Activated T-helper 2 cell treated with anti-CD3 and anti-CD28 coated beads, Interferon-gamma antibody, Interleukin-2, Interleukin-4, amounts not matched to agents 10 μg/mL and 5 μg/mL and 100 μg/mL, durations not matched to agents 14 hours and 24 hours and 36 hours (primary cell): ENCODE measurements at regions of chr18 and their contacts with region 1.

Region 1: DNA sequence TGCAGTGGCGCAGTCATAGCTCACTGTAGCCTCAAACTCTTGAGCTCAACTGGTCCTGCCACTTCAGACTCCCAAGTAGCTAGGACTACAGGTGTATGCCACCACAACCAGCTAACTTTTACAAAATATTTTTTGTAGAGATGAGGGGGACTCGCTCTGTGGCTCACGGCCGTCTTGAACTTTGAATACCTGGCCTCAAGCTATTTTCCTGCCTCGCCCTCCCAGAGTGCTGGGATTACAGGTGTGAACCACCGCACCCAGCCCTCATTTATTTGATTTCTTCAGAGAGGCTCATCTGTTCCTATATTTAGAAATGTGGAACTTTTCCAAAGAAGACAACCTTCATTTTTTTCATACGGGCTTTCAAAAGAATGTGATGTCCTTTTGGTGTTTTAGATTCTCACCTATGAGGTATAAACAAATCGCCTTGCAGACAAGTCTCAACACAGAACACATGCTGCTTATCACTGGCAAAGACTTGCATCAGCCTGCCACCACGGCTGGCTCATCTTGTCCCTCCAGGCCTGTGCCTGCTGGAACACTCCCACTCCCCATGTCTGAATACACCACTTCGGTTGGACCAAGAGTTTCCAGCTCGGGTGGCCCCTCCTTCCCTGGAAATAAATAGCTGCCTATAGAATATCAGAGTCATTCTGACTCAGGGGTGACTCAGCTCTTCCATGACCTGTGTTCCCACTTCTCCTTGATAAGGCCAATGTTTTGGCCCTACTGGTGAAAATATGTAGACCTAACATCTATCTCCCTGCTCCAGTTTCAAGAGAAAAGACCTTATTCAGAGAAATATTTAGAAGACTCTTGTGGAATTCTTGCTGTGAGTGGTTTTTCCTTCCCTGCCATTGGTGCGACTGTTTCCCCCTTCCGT is 202.6 kb downstream of the TGIF1 start:
- DNase-seq: peak; percentile 34
- H3K4me3 Mint-ChIP-seq: peak overlapping the region; percentile 60
- H3K27ac Mint-ChIP-seq: peak overlapping the region; percentile 92
- H3K4me1 Mint-ChIP-seq: peaks cover 53% of the 10 kb centered on the region
- H3K27me3 Mint-ChIP-seq: no peaks in the 10 kb centered on the region

Region 2: DNA sequence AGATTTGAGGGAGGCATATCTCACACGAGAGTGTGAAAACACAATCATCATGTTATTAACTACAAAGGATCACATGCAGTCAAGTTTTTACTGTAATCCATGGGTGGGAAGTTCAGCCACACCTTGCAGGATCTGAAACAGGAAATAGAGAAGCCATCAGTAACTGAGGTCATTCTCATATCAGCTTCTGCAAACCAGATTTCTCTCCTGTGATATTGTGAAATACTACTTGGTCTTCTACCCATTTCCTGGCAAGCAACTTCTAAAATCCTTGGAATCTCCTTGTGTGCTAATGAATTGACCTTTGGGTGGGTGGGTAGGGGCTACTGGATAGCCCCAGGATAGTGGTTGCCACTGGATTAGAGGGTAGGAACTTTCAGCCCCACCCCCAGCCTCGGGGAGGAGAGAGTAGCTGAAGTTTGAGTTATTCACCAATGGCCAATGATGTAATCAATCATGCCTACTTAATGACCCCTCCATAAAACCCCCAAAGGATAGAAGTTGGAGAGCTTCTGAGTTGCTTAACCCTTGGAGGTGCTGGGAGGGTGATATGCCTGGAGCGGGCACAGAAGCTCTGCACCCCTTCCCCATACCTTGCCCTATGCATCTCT is 228.2 kb before region 1 on chr18:
- intact Hi-C with region 1: no loop called
- DNase-seq: no peak
- H3K4me3 Mint-ChIP-seq: no peak overlapping the region
- H3K27ac Mint-ChIP-seq: no peak overlapping the region
- H3K4me1 Mint-ChIP-seq: no peaks in the 10 kb centered on the region
- H3K27me3 Mint-ChIP-seq: peaks cover under 1% of the 10 kb centered on the region

Region 3: DNA sequence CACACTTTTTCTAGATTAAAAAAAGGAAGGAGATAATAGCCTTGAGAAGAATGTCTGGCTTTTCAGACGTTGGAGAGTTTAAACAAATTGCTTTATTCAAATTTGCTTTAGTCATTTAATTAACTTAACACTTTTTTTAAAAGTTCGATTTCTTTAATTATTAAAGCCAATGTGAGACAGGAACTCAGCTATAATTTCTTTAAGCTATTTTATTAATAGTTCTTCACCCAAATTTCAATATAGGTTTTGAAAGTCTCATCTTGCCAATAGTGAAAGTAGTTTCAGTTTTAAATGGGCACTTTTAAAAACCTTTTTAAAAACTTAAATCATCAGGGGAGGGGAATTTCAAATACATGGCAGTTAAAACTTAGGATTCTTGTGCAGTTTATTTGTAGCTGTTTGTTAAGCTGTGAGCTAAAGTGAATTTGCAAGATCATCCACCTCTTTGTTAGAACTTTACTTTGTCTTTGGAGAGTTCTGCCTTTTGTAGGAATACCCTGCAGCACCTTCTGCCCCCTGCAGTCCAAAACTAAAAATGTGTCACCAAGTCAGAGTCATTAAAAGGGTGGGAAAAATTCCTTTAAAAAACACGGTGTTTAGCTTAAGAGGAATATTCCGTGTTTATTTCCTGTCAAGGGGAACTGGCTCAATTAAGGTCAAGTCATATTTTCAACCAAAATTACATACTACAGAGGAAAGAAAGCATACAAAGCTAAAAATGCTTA is 198.1 kb before region 1 on chr18:
- intact Hi-C with region 1: loop called (anchors 2 kb)
- DNase-seq: no peak
- H3K4me3 Mint-ChIP-seq: peak overlapping the region; percentile 86
- H3K27ac Mint-ChIP-seq: peak overlapping the region; percentile 97
- H3K4me1 Mint-ChIP-seq: peaks cover 50% of the 10 kb centered on the region
- H3K27me3 Mint-ChIP-seq: no peaks in the 10 kb centered on the region

Region 4: DNA sequence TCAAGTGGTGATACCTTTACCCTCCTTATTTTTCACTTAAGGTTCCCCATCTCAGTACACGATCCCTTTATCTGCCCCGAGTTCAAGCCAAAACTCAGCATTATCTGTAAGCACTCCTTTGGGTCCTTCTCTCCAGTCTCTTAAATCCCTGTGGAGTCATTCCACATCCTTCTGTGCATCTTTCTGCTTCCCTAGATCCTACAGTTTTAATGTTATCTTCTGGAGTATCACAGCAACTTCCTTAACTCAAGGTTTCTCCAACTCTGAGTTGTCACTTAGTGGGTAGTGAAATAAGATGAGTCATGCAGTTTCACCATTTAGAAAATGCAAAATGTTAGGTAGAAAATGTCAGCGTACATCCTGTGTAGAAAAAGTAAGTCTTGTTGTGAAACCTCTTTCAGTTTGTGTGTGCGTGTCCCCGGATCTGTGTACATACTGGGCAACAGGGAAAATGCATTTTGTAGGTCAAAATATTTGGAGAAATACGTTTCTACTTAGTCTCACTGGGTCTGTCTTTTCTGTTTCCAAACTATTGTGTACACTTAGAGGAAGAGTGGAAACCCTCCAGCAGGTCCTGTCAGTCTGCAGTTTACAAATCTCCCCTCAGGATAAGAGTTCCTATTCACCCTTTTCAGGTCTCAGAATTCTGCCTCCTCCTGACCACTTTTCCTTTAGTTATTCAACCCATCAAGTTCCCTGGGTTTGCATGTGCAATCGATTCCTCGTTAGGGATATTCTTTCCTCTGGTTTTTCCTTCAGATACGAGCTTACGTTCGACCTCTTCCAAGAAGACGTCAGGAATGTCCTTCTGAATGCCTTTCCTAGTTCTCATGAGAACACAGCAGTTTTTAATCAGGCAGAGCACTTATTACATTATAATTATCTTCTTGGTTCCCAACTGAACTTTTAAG is 47.9 kb before region 1 on chr18:
- intact Hi-C with region 1: loop called (anchors 1 kb)
- DNase-seq: no peak
- H3K4me3 Mint-ChIP-seq: no peak overlapping the region
- H3K27ac Mint-ChIP-seq: no peak overlapping the region
- H3K4me1 Mint-ChIP-seq: peaks cover 16% of the 10 kb centered on the region
- H3K27me3 Mint-ChIP-seq: no peaks in the 10 kb centered on the region

Region 5: DNA sequence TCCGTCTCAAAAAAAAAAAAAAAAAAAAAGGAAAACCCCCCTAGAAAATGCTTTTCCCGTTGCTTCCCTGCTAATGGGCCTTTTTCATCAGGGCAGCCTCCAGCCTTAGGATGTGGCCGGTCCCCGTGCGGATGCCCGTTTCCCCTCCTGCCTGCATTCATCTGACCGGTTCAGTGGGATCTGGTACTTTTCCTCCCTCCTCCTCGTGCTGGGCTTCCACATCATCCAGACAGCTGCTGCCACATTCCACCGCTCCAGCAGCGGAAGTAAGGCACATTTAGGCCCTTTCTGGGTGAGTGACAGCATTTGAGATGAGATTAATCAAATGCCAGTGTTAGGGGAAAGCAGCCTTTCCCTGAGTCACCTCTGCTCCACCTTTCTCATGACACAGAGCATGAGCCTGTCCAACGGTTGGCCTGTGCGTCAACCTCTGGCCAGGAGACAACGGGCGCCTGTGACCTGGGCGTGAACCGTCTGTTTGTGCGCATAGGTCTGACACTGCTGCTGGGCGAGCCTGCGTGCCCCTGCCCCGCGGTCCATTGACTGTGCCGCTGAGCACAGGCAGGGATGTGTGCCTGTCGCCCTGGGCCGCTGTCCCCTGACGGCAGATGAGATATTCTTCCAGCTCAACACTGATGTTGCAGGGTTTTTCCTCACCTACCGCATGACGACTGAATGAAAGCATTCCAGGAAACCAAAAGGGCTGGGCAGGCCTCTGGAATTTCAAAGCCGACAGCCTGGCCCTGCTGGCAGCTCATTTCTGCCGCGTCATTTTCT is 28.7 kb before region 1 on chr18:
- intact Hi-C with region 1: loop called (anchors 2 kb)
- DNase-seq: no peak
- H3K4me3 Mint-ChIP-seq: peak overlapping the region; percentile 60
- H3K27ac Mint-ChIP-seq: peak overlapping the region; percentile 92
- H3K4me1 Mint-ChIP-seq: peaks cover 37% of the 10 kb centered on the region
- H3K27me3 Mint-ChIP-seq: no peaks in the 10 kb centered on the region

Region 6: DNA sequence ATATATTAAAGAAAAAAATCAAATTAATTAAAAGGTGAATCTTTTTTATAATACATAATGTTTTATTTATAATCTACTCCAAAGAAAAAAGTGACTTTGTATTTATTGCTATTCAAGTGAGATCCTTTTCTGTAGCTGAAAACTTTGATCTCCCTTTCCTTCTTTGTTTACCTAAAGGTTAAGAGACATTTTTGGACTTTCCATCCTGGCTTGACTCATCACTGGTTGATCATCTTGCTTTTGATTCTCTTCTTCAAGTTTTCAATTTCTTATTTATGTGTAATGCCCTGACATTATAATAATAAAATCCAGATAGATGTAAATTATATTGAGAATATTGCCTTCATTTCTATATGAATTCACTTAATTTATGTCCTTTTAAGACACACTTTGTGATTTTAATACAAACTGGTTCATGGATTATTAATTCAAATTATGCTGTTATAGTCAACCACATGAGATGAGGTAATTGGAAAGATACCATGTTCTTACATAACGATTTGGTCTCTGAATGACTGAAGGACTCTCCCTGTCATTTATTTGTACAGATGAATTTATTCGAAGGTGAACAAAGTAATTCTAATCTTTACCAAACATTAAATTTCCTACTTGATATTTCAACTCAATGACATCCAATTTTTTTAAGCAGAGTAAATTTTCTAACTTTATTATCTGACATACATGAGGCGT is 18.2 kb before region 1 on chr18:
- intact Hi-C with region 1: loop called (anchors 2 kb)
- DNase-seq: no peak
- H3K4me3 Mint-ChIP-seq: no peak overlapping the region
- H3K27ac Mint-ChIP-seq: peak overlapping the region; percentile 21
- H3K4me1 Mint-ChIP-seq: peaks cover 23% of the 10 kb centered on the region
- H3K27me3 Mint-ChIP-seq: no peaks in the 10 kb centered on the region